ENCODE measurements at regions of chr1 and their contacts with region 1.

Region 1: DNA sequence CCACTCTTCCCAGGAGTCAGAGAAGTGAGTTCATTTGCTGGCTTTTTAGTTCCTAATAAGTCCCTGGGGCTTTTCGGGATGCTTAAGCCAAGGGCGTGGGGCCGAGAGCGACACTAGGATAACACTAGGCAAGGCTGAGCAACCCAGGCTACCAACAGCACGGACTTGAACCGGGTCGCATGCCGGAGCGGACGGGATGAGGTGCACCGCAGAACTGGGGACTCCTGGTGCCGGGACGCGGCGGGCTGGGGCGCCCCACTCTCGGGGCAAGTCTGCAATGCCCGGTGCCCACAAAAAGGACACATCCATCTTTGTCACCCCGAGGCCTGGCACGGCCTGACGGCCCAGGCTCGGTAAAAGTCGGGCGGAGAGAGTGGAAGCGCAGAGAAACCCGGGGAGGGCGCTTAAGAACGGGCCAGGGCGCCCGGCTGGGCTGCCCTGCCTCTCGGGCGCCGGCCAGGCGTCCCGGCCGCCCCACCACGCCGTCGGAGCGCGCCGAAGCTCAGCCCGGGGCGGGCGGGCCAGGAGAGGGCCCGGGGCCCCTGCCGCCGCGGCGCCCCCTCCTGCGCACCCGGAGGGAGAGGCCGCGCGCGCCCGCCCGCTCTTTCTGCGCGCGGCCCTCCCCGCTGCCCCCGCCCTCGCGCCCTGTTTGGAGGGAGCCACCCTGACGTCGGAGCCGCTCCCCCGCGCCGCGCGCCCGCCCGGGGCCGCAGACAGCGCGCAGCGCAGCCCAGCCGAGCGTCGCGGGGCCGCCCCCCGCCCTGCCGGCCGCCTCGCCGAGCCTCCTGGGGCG is at the start of gene NBL1:
- DNase-seq: peak; percentile 55
- H3K4me3 Mint-ChIP-seq: peak within 1 kb of the TSS; percentile 92
- H3K27ac Mint-ChIP-seq: peak within 1 kb of the TSS; percentile 91
- H3K4me1 Mint-ChIP-seq: peaks cover 54% of the 10 kb centered on the region
- H3K27me3 Mint-ChIP-seq: no peaks in the 10 kb centered on the region
- CTCF ChIP-seq: no peak
- total RNA-seq, gene NBL1: 70.4 and 73.3 TPM in 2 replicates

Region 2: GRCh38 chr1:19390901-19391595 is 252.8 kb before region 1 on chr1:
- CTCF ChIA-PET with region 1: interaction called, 10 read pairs
- POLR2A ChIA-PET with region 1: interaction called, 7 read pairs
- intact Hi-C with region 1: no loop called
- DNase-seq: peak; percentile 43
- H3K4me3 Mint-ChIP-seq: no peak overlapping the region
- H3K27ac Mint-ChIP-seq: no peak overlapping the region
- H3K4me1 Mint-ChIP-seq: peaks cover 26% of the 10 kb centered on the region
- H3K27me3 Mint-ChIP-seq: no peaks in the 10 kb centered on the region
- CTCF ChIP-seq: peak; percentile 75

Region 3: GRCh38 chr1:19439464-19440171 is 204.2 kb before region 1 on chr1:
- CTCF ChIA-PET with region 1: interaction called, 3 read pairs
- POLR2A ChIA-PET with region 1: interaction called, 33 read pairs
- intact Hi-C with region 1: loop called (anchors 5 kb)
- DNase-seq: peak; percentile 41
- H3K4me3 Mint-ChIP-seq: no peak overlapping the region
- H3K27ac Mint-ChIP-seq: peak overlapping the region; percentile 83
- H3K4me1 Mint-ChIP-seq: peaks cover 72% of the 10 kb centered on the region
- H3K27me3 Mint-ChIP-seq: no peaks in the 10 kb centered on the region
- CTCF ChIP-seq: no peak

Region 4: GRCh38 chr1:19563324-19564097 is 80.3 kb before region 1 on chr1:
- CTCF ChIA-PET with region 1: no interaction called
- POLR2A ChIA-PET with region 1: no interaction called
- intact Hi-C with region 1: no loop called
- DNase-seq: no peak
- H3K4me3 Mint-ChIP-seq: no peak overlapping the region
- H3K27ac Mint-ChIP-seq: no peak overlapping the region
- H3K4me1 Mint-ChIP-seq: no peaks in the 10 kb centered on the region
- H3K27me3 Mint-ChIP-seq: no peaks in the 10 kb centered on the region
- CTCF ChIP-seq: no peak

Region 5: DNA sequence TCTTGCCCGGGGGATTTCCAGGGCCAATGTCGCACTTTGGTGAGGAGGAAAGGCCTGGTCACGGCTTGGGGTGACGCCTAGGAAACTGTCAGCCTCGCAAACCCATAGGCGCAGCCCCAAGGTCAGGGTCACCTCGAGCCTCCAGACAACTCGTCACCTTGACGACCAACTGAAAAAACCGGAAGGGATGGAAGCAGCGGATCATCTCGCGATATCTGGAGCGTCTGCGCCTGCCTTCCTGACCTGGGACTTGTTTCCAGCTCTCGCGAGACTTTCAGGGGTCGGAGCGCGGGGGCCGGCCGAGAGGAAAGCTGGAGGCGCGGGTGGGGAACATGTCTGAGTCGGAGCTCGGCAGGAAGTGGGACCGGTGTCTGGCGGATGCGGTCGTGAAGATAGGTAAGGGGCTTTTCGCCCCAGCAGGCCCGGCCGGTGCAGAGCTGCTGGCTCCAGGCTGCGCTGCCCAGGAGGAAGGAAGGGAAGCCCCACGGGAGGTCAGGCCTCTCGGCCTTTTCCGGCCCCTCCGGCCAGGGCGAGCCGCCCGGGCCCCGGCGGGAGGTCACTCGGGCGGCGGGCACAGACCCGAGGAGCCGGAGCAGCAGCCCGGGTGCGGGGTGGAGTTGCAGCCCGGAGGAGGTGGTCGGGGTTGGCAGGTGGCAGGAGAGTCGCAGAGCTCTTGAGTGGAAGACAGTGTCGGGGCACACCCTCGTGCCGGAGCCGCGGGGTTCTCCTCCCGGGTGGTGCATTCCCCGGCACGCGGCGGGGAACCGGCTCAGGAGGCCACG is 46.9 kb before region 1 on chr1:
- CTCF ChIA-PET with region 1: interaction called, 9 read pairs
- POLR2A ChIA-PET with region 1: interaction called, 101 read pairs
- intact Hi-C with region 1: loop called (anchors 2 kb)
- DNase-seq: peak; percentile 98
- H3K4me3 Mint-ChIP-seq: peak overlapping the region; percentile 95
- H3K27ac Mint-ChIP-seq: peak overlapping the region; percentile 98
- H3K4me1 Mint-ChIP-seq: peaks cover 28% of the 10 kb centered on the region
- H3K27me3 Mint-ChIP-seq: no peaks in the 10 kb centered on the region
- CTCF ChIP-seq: no peak

Region 6: GRCh38 chr1:19616489-19616888 is 27.3 kb before region 1 on chr1:
- CTCF ChIA-PET with region 1: interaction called, 7 read pairs
- POLR2A ChIA-PET with region 1: interaction called, 24 read pairs
- intact Hi-C with region 1: no loop called
- DNase-seq: peak; percentile 42
- H3K4me3 Mint-ChIP-seq: no peak overlapping the region
- H3K27ac Mint-ChIP-seq: peak overlapping the region; percentile 75
- H3K4me1 Mint-ChIP-seq: peaks cover 53% of the 10 kb centered on the region
- H3K27me3 Mint-ChIP-seq: no peaks in the 10 kb centered on the region
- CTCF ChIP-seq: no peak

Region 7: GRCh38 chr1:19628879-19629278 is 14.9 kb before region 1 on chr1:
- CTCF ChIA-PET with region 1: interaction called, 5 read pairs
- POLR2A ChIA-PET with region 1: interaction called, 11 read pairs
- intact Hi-C with region 1: no loop called
- DNase-seq: no peak
- H3K4me3 Mint-ChIP-seq: no peak overlapping the region
- H3K27ac Mint-ChIP-seq: no peak overlapping the region
- H3K4me1 Mint-ChIP-seq: no peaks in the 10 kb centered on the region
- H3K27me3 Mint-ChIP-seq: no peaks in the 10 kb centered on the region
- CTCF ChIP-seq: no peak